Activated T-helper 2 cell treated with anti-CD3 and anti-CD28 coated beads, Interferon-gamma antibody, Interleukin-2, Interleukin-4, amounts not matched to agents 10 μg/mL and 5 μg/mL and 100 μg/mL, durations not matched to agents 14 hours and 24 hours and 36 hours (primary cell): ENCODE measurements at regions of chrX and their contacts with region 1.

Region 1: GRCh38 chrX:136635235-136635634 is 12.7 kb upstream of the CD40LG start:
- DNase-seq: no peak
- H3K4me3 Mint-ChIP-seq: peak overlapping the region; percentile 55
- H3K27ac Mint-ChIP-seq: peak overlapping the region; percentile 80
- H3K4me1 Mint-ChIP-seq: peaks cover 71% of the 10 kb centered on the region
- H3K27me3 Mint-ChIP-seq: no peaks in the 10 kb centered on the region

Region 2: DNA sequence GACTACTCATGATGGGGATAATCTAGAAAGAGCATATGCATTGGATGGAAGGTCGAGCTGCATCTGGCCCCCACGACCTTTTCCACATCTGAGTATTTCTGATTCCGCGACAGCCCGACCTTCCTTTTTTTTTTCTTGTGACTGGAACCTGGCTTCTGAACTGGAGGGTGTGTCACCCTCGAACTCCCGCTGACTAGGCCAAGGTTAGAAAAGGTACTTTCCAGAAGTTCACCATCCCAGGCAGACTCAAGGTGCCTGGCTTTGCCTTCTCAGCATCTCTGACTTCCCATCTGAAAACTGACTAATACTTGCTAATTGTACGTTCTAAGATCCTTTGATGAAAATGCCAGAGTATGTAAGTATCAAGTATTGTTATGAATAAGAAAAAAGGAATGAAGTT is 36.6 kb before region 1 on chrX:
- intact Hi-C with region 1: no loop called
- DNase-seq: no peak
- H3K4me3 Mint-ChIP-seq: no peak overlapping the region
- H3K27ac Mint-ChIP-seq: peak overlapping the region; percentile 61
- H3K4me1 Mint-ChIP-seq: peaks cover 40% of the 10 kb centered on the region
- H3K27me3 Mint-ChIP-seq: no peaks in the 10 kb centered on the region

Region 3: DNA sequence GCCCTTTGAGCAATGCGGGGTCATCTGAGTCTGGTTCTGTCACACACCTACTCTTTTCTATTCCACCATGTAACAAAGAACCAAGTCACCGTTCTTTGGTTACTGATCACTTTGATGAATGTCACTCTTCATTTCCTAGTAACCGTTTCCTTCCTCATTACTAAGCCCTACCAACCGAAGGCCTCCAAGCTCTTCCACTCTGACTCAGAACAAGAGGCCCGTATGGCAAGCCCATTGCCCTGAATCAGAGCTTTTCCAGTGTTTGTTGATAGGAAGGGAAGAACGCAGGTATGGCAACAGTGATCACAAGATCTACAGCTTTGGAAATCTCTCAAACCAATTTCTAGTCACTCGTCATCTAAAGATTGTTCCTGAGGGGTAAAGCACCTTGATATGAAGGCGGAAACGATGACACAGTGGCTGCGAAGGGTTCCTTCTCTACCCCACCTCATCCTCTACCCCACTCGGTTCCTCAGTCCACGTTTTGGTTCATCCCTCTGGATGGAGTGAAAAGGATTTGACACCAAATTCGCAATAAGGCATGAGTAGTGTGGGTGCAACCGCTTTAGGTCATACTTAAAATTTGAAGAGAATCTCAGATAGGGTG is 15.2 kb before region 1 on chrX:
- intact Hi-C with region 1: loop called (anchors 1 kb)
- DNase-seq: peak; percentile 51
- H3K4me3 Mint-ChIP-seq: no peak overlapping the region
- H3K27ac Mint-ChIP-seq: peak overlapping the region; percentile 84
- H3K4me1 Mint-ChIP-seq: peaks cover 67% of the 10 kb centered on the region
- H3K27me3 Mint-ChIP-seq: no peaks in the 10 kb centered on the region